ENCODE measurements at regions of chr9 and their contacts with region 1.

Region 1: GRCh38 chr9:73269430-73270101 is 117.9 kb downstream of the ANXA1 start:
- DNase-seq: no peak
- H3K4me3 ChIP-seq: no peak overlapping the region
- H3K27ac ChIP-seq: no peak overlapping the region
- H3K4me1 ChIP-seq: no peaks in the 10 kb centered on the region
- H3K27me3 ChIP-seq: no peaks in the 10 kb centered on the region
- CTCF ChIP-seq: peak; percentile 59

Region 2: GRCh38 chr9:73183917-73184861 is 85.4 kb before region 1 on chr9:
- intact Hi-C with region 1: no loop called
- DNase-seq: no peak
- H3K4me3 ChIP-seq: no peak overlapping the region
- H3K27ac ChIP-seq: no peak overlapping the region
- H3K4me1 ChIP-seq: no peaks in the 10 kb centered on the region
- H3K27me3 ChIP-seq: no peaks in the 10 kb centered on the region
- CTCF ChIP-seq: peak; percentile 71

Region 3: GRCh38 chr9:73565833-73566465 is 296.4 kb after region 1 on chr9:
- intact Hi-C with region 1: loop called (anchors 5 kb)
- DNase-seq: no peak
- H3K4me3 ChIP-seq: no peak overlapping the region
- H3K27ac ChIP-seq: no peak overlapping the region
- H3K4me1 ChIP-seq: no peaks in the 10 kb centered on the region
- H3K27me3 ChIP-seq: no peaks in the 10 kb centered on the region
- CTCF ChIP-seq: peak; percentile 75

Region 4: DNA sequence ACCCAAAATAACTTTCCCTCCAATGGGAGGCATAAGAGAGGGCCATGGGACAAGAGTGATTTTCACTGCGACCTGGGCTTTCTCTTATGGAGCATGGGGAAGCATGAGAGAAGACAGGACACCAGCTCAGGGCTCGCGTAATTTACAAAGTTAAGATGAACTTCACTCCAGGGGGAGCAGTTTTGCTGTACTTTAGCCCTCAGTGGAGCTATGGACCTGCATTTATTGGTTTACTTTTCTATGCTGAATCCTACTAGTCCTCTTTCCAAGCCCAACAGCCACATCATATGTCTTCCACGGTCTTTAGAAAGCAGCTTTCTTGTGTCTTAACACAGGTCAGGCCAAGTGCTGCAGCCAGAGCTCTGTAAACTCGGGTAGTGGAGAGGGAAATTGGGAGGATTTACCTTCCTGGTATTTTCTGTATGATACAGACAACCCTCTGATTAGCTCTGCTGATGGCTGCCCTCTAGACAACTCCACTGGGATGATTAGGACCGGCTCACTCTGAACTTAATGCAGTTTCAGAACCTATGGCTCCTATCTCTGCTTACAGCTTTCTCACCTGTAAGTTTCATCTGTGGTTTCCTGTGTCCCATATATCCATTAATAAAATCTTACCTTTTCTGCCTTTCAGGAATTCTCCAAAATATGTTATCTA is 646.6 kb after region 1 on chr9:
- intact Hi-C with region 1: no loop called
- DNase-seq: no peak
- H3K4me3 ChIP-seq: no peak overlapping the region
- H3K27ac ChIP-seq: no peak overlapping the region
- H3K4me1 ChIP-seq: no peaks in the 10 kb centered on the region
- H3K27me3 ChIP-seq: no peaks in the 10 kb centered on the region
- CTCF ChIP-seq: peak; percentile 13

Measured in left ventricle myocardium inferior (tissue), 1 donor.